B cell (primary cell): ENCODE measurements at regions of chr20 and their contacts with region 1.

Region 1: GRCh38 chr20:48912065-48912762 is 9.3 kb upstream of the ARFGEF2 start:
- DNase-seq: peak; percentile 87
- ATAC-seq: peak; percentile 94
- H3K4me3 ChIP-seq: peak overlapping the region in 1 of 5 experiments; percentile 4
- H3K4me3 Mint-ChIP-seq: peak overlapping the region; percentile 33
- H3K27ac ChIP-seq: peak overlapping the region in 1 of 2 donors; percentile 77
- H3K27ac Mint-ChIP-seq: peak overlapping the region; percentile 77
- H3K4me1 ChIP-seq: peaks cover 27 to 36% of the 10 kb centered on the region in 2 donors
- H3K4me1 Mint-ChIP-seq: peaks cover 30% of the 10 kb centered on the region
- H3K27me3 ChIP-seq: no peaks in the 10 kb centered on the region
- H3K27me3 Mint-ChIP-seq: no peaks in the 10 kb centered on the region
- CTCF ChIP-seq: no peak

Region 2: DNA sequence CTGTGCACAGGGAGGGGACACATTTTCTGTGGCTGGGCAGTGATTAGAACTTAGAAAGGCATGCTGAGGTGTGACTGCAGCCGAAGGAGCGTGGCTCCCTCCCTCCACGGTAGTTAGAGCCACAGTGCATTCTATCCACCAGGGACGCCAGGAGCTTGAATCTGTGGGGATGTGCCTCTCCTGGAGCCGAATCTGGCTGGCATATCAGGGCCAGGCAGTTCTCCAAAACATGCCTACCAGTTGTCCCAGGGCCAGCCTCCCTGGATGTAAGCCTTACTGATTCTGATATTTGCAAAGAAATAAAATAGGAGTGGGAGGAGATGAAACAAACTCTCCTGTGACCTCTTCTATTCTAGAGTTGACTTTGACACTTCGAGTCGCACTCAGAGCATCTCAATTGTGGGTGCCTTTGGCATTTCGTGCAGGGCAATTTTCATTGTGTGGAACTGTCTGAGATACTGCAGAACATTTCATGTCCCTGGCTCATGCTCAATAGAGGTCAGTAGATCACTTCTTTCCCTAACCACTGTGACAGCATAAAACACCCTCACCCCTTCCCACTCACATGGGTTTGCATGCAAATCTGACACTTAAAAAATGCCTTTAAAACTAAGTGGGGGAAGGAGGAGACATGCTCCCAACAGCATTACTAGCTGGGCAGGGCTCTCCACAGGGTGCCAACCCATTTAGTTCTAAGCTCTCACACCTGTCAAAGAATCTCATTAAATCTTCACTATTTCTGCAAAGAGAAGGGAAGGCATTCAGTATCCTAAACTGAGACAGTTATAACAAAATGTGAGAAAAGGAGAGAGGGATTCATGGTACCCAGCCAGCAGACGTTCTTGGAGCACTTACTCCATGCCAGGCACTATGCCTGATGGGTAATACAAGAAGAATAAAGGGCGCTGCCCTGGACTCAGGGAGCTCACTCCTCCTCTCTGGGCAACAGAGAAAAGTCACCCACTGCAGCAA is 463.3 kb before region 1 on chr20:
- CTCF ChIA-PET with region 1: no interaction called
- POLR2A ChIA-PET with region 1: no interaction called
- intact Hi-C with region 1: no loop called
- DNase-seq: no peak
- ATAC-seq: no peak
- H3K4me3 ChIP-seq: no peak overlapping the region
- H3K4me3 Mint-ChIP-seq: no peak overlapping the region
- H3K27ac ChIP-seq: no peak overlapping the region
- H3K27ac Mint-ChIP-seq: no peak overlapping the region
- H3K4me1 ChIP-seq: no peaks in the 10 kb centered on the region
- H3K4me1 Mint-ChIP-seq: no peaks in the 10 kb centered on the region
- H3K27me3 ChIP-seq: peaks cover 0 to 4% (median 1%) of the 10 kb centered on the region in 4 experiments
- H3K27me3 Mint-ChIP-seq: peaks cover 25% of the 10 kb centered on the region
- CTCF ChIP-seq: no peak

Region 3: GRCh38 chr20:48846498-48847485 is 65.4 kb before region 1 on chr20:
- CTCF ChIA-PET with region 1: no interaction called
- POLR2A ChIA-PET with region 1: no interaction called
- intact Hi-C with region 1: loop called (anchors 2 kb)
- DNase-seq: peak; percentile 67
- ATAC-seq: peak; percentile 95
- H3K4me3 ChIP-seq: no peak overlapping the region
- H3K4me3 Mint-ChIP-seq: peak overlapping the region; percentile 64
- H3K27ac ChIP-seq: no peak overlapping the region
- H3K27ac Mint-ChIP-seq: peak overlapping the region; percentile 74
- H3K4me1 ChIP-seq: peaks cover 24 to 25% of the 10 kb centered on the region in 2 donors
- H3K4me1 Mint-ChIP-seq: peaks cover 41% of the 10 kb centered on the region
- H3K27me3 ChIP-seq: no peaks in the 10 kb centered on the region
- H3K27me3 Mint-ChIP-seq: no peaks in the 10 kb centered on the region
- CTCF ChIP-seq: no peak

Region 4: DNA sequence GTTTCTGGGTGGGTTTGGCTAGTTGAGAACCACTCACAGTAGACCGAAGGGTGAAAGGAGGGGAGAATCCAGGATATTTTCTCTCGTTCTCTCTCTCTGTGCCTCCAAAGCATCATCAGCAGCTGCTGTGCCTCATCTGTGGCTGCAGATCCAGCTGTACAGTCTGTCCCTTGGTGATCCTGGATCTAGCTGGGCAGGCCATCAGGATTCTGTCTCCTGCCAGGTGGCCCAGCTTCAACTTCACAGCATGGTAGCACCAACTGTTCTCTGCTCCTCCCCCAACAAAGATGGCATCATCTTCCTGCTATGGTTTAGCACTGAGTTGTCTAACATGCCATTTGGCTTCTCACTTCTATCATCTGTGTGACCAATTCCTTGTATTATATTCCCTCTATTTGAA is 19.4 kb before region 1 on chr20:
- CTCF ChIA-PET with region 1: no interaction called
- POLR2A ChIA-PET with region 1: no interaction called
- intact Hi-C with region 1: no loop called
- DNase-seq: no peak
- ATAC-seq: no peak
- H3K4me3 ChIP-seq: no peak overlapping the region
- H3K4me3 Mint-ChIP-seq: no peak overlapping the region
- H3K27ac ChIP-seq: no peak overlapping the region
- H3K27ac Mint-ChIP-seq: no peak overlapping the region
- H3K4me1 ChIP-seq: peaks cover 6 to 8% of the 10 kb centered on the region in 2 donors
- H3K4me1 Mint-ChIP-seq: peaks cover 26% of the 10 kb centered on the region
- H3K27me3 ChIP-seq: no peaks in the 10 kb centered on the region
- H3K27me3 Mint-ChIP-seq: no peaks in the 10 kb centered on the region
- CTCF ChIP-seq: no peak